ENCODE measurements at regions of chr4 and their contacts with region 1.

Region 1: GRCh38 chr4:77385124-77385969 is 220.3 kb upstream of the CXCL13 start:
- DNase-seq: peak; percentile 75 to 79 (median 76)
- ATAC-seq: peak; percentile 92
- H3K4me3 ChIP-seq: no peak overlapping the region
- H3K27ac ChIP-seq: no peak overlapping the region
- H3K4me1 ChIP-seq: no peaks in the 10 kb centered on the region
- H3K27me3 ChIP-seq: no peaks in the 10 kb centered on the region
- CTCF ChIP-seq: peak; percentile 64 to 88 (median 83)
- POLR2A ChIP-seq: no peak

Region 2: DNA sequence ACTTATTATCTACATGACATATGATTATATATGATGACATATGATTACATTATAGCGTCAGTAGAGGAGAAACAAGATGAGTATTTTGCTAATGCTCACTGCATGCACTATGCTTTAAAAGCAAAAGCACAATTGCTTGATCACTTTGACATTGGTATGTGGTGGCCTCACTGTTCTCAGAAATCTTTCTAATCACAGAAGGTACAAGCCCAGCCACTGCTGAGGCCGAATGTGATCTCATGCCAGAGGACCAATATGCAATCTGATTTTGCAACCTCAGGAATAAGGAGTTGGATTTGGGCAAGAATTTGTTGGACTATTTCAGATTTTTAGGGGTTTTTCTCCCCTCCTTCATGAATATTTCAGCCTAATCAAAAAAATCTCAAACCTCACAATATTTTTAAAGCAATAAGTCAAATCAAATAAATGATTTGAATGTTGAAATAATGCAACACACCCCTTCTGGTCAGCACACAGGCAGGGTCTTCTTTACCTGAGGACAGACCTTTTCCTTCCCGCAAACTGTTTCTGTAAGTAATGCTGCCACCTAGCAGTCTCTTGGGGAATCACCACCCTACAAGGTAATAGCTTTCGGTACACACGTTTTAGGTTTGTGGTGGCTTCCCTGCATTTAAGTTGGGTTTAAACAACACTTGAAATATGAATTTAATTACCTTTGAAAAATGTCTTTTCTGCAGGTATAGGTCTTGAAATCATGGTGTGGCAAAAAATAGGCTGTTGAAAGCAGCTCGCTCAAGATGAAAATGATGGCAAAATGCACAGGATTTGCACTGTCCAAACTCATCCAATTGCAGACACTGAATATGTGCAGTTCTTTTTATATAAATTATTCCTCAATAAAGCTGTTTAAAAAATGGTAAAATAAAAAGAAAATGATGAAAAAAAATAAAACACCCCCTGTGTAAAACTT is 215.4 kb after region 1 on chr4:
- intact Hi-C with region 1: loop called (anchors 10 kb)
- DNase-seq: peak; percentile 39 to 62 (median 48)
- ATAC-seq: peak; percentile 75
- H3K4me3 ChIP-seq: no peak overlapping the region
- H3K27ac ChIP-seq: no peak overlapping the region
- H3K4me1 ChIP-seq: peaks cover 13% of the 10 kb centered on the region
- H3K27me3 ChIP-seq: no peaks in the 10 kb centered on the region
- CTCF ChIP-seq: peak; percentile 38 to 77 (median 73)
- POLR2A ChIP-seq: no peak

Region 3: GRCh38 chr4:77697860-77698590 is 312.7 kb after region 1 on chr4:
- intact Hi-C with region 1: loop called (anchors 10 kb)
- DNase-seq: peak; percentile 62 to 83 (median 74)
- ATAC-seq: peak; percentile 96
- H3K4me3 ChIP-seq: no peak overlapping the region
- H3K27ac ChIP-seq: peak overlapping the region; percentile 52 to 79 (median 74)
- H3K4me1 ChIP-seq: peaks cover 10% of the 10 kb centered on the region
- H3K27me3 ChIP-seq: no peaks in the 10 kb centered on the region
- CTCF ChIP-seq: peak; percentile 43 to 89 (median 79)
- POLR2A ChIP-seq: peak in 2 of 3 donors; percentile 33 to 48

Measured in body of pancreas (tissue), 4 donors.